GM12878 (cell line): ENCODE measurements at regions of chr2 and their contacts with region 1.

Region 1: DNA sequence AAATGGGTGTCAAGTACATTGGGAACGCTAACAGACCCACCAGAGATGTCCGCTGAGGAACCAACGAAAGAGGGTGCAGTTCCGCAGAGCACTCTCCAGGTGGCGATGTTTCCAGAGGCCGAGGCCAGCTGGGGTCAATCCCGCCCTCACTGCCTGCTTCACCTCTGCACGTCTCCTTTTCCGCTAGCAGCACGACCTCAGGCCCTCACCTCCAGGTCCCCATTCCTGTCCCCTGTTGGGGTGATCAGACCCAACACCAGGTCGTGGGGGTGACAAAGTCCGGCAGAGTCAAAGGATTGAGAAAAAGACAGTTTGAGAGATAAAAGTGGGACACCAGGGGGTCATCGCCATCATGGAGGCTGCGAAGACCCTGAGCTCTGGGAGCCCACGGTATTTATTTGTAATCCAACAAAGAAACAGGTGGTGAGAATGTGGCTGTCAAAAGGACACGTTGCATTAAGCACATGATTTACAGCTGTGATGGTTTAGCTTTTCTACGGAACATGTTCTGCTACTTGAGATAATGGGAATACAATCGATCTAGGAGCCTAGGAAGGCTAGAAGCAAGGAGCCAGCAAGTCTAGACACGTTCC is 27.3 kb downstream of the ZAP70 start:
- DNase-seq: no peak
- ATAC-seq: peak; percentile 78
- H3K4me3 ChIP-seq: no peak overlapping the region
- H3K27ac ChIP-seq: no peak overlapping the region
- H3K4me1 ChIP-seq: peaks cover 7% of the 10 kb centered on the region
- H3K27me3 ChIP-seq: no peaks in the 10 kb centered on the region
- CTCF ChIP-seq: peak; percentile 84 to 92 (median 87)
- EP300 ChIP-seq: no peak
- POLR2A ChIP-seq: no peak
- RAD21 ChIP-seq: peak; percentile 59

Region 2: GRCh38 chr2:96554293-96555145 is 1186.2 kb before region 1 on chr2:
- CTCF ChIA-PET with region 1: no interaction called
- POLR2A ChIA-PET with region 1: no interaction called
- RAD21 ChIA-PET with region 1: no interaction called
- SMC1A ChIA-PET with region 1: no interaction called
- in situ Hi-C with region 1: no loop called
- intact Hi-C with region 1: no loop called
- DNase-seq: no peak
- ATAC-seq: peak; percentile 79
- H3K4me3 ChIP-seq: no peak overlapping the region
- H3K27ac ChIP-seq: no peak overlapping the region
- H3K4me1 ChIP-seq: no peaks in the 10 kb centered on the region
- H3K27me3 ChIP-seq: no peaks in the 10 kb centered on the region
- CTCF ChIP-seq: peak; percentile 88 to 95 (median 91); a peak in 5 of 6 replicates
- EP300 ChIP-seq: no peak
- POLR2A ChIP-seq: peak; percentile 64
- RAD21 ChIP-seq: peak; percentile 77

Region 3: GRCh38 chr2:97751752-97752151 is 11.1 kb after region 1 on chr2:
- CTCF ChIA-PET with region 1: interaction called, 39 read pairs
- POLR2A ChIA-PET with region 1: no interaction called
- RAD21 ChIA-PET with region 1: interaction called, 3 read pairs
- SMC1A ChIA-PET with region 1: interaction called, 7 read pairs
- in situ Hi-C with region 1: no loop called
- intact Hi-C with region 1: no loop called
- DNase-seq: no peak
- ATAC-seq: no peak
- H3K4me3 ChIP-seq: no peak overlapping the region
- H3K27ac ChIP-seq: no peak overlapping the region
- H3K4me1 ChIP-seq: no peaks in the 10 kb centered on the region; the same call in 1 of the 2 replicates
- H3K27me3 ChIP-seq: no peaks in the 10 kb centered on the region
- CTCF ChIP-seq: no peak
- EP300 ChIP-seq: no peak
- POLR2A ChIP-seq: no peak
- RAD21 ChIP-seq: no peak

Region 4: GRCh38 chr2:97766567-97766966 is 25.9 kb after region 1 on chr2:
- CTCF ChIA-PET with region 1: interaction called, 16 read pairs
- POLR2A ChIA-PET with region 1: no interaction called
- RAD21 ChIA-PET with region 1: no interaction called
- SMC1A ChIA-PET with region 1: interaction called, 4 read pairs
- in situ Hi-C with region 1: no loop called
- intact Hi-C with region 1: no loop called
- DNase-seq: no peak
- ATAC-seq: no peak
- H3K4me3 ChIP-seq: no peak overlapping the region
- H3K27ac ChIP-seq: no peak overlapping the region
- H3K4me1 ChIP-seq: no peaks in the 10 kb centered on the region
- H3K27me3 ChIP-seq: no peaks in the 10 kb centered on the region
- CTCF ChIP-seq: no peak
- EP300 ChIP-seq: no peak
- POLR2A ChIP-seq: no peak
- RAD21 ChIP-seq: no peak

Region 5: DNA sequence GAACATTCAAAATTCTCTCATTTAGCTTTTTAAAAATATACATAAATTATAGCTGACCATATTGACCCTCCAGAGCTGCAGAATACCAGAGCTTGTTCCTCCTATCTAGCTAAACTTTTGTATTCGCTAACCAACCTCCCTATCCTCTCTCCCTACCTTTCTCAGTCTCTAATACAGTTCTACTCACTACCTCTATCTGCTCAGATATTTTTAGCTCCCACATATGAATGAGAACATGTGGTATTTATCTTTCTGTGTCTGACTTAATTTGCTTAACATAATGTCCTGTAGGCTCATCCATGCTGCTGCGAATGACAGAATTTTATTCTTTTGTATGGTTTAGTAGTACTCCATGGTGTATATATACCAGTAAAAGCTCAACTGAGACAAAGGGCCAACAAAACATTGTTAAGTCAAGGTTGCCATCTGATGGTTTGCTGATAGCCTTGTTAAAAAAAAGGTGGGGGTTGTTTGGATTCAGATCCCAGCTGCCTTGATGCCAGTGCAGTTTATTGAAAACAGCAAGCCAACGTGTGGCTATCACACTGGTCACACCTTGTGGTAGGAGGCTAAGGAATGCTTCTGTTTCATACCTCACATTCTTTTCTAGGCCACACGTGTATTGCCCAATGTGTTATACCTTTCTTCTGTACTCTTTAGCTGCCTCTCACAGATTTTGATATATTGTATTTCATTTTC is 447.8 kb after region 1 on chr2:
- CTCF ChIA-PET with region 1: interaction called, 16 read pairs
- POLR2A ChIA-PET with region 1: no interaction called
- RAD21 ChIA-PET with region 1: interaction called, 7 read pairs
- SMC1A ChIA-PET with region 1: interaction called, 8 read pairs
- in situ Hi-C with region 1: no loop called
- intact Hi-C with region 1: no loop called
- DNase-seq: no peak
- ATAC-seq: no peak
- H3K4me3 ChIP-seq: no peak overlapping the region
- H3K27ac ChIP-seq: no peak overlapping the region
- H3K4me1 ChIP-seq: no peaks in the 10 kb centered on the region; the same call in 1 of the 2 replicates
- H3K27me3 ChIP-seq: no peaks in the 10 kb centered on the region; a peak in 1 of 4 replicates
- CTCF ChIP-seq: peak in 2 of 3 experiments; percentile 21 to 34; a peak in 3 of 6 replicates
- EP300 ChIP-seq: no peak
- POLR2A ChIP-seq: no peak
- RAD21 ChIP-seq: peak; percentile 51

Region 6: DNA sequence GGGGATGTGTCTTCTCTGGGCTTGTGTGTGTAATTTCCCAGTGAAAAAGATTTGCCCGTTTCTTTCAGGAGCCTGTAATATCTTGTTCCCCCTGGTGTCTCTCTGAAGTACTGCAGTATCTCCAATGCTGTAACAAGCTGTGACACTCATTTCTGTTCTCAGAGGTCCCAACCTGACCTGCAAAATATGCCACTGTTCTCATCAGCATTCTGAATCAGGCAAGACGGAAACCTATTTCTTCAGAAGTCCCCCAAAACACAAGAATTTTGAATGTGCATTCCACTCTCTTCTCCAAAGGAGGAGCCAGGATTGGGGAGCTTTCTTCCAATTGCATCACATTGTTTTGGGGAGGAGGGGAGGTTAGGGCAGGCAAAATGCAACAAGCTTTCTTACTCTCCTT is 528.6 kb after region 1 on chr2:
- CTCF ChIA-PET with region 1: interaction called, 29 read pairs
- POLR2A ChIA-PET with region 1: no interaction called
- RAD21 ChIA-PET with region 1: interaction called, 4 read pairs
- SMC1A ChIA-PET with region 1: interaction called, 9 read pairs
- in situ Hi-C with region 1: no loop called
- intact Hi-C with region 1: loop called (anchors 2 kb)
- DNase-seq: no peak
- ATAC-seq: peak; percentile 91
- H3K4me3 ChIP-seq: no peak overlapping the region
- H3K27ac ChIP-seq: no peak overlapping the region
- H3K4me1 ChIP-seq: no peaks in the 10 kb centered on the region
- H3K27me3 ChIP-seq: no peaks in the 10 kb centered on the region; a peak in 1 of 4 replicates
- CTCF ChIP-seq: peak; percentile 54 to 76 (median 66)
- EP300 ChIP-seq: no peak
- POLR2A ChIP-seq: no peak
- RAD21 ChIP-seq: peak; percentile 78

Region 7: GRCh38 chr2:98385050-98385699 is 644.5 kb after region 1 on chr2:
- CTCF ChIA-PET with region 1: interaction called, 31 read pairs
- POLR2A ChIA-PET with region 1: no interaction called
- RAD21 ChIA-PET with region 1: interaction called, 22 read pairs
- SMC1A ChIA-PET with region 1: interaction called, 17 read pairs
- in situ Hi-C with region 1: loop called (anchors 10 kb)
- intact Hi-C with region 1: loop called (anchors 1 kb)
- DNase-seq: peak; percentile 11
- ATAC-seq: peak; percentile 99
- H3K4me3 ChIP-seq: no peak overlapping the region
- H3K27ac ChIP-seq: no peak overlapping the region
- H3K4me1 ChIP-seq: no peaks in the 10 kb centered on the region
- H3K27me3 ChIP-seq: peaks cover 0 to 2% of the 10 kb centered on the region in 2 experiments; a peak in 3 of 4 replicates
- CTCF ChIP-seq: peak; percentile 98 to 100 (median 99); a peak in 5 of 6 replicates
- EP300 ChIP-seq: no peak
- POLR2A ChIP-seq: no peak
- RAD21 ChIP-seq: peak; percentile 99